Activated naive CD4-positive, alpha-beta T cell treated with anti-CD3 and anti-CD28 coated beads for 36 hours (primary cell): ENCODE measurements at regions of chr6 and their contacts with region 1.

Region 1: DNA sequence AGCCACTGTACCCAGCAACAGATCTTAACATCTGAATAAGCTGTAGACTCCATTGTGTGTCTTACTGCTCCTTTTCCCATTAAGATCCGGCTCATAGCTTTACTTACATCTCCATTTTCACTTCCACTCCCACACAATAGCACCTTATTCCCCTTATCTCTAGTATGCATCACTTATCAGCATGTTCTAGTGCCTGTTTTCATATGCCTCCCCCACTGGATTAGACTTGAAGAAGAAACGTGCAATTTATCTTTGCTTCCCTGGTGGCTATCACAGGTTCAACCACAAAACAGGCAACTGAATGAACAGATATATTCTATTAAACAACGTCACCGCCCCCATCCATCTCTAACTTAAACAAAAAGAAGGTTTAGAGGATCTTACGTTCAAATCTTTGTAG is 12.1 kb downstream of the SSR1 start:
- DNase-seq: no peak
- H3K4me3 Mint-ChIP-seq: no peak overlapping the region
- H3K27ac Mint-ChIP-seq: no peak overlapping the region
- H3K4me1 Mint-ChIP-seq: peaks cover 19% of the 10 kb centered on the region
- H3K27me3 Mint-ChIP-seq: no peaks in the 10 kb centered on the region

Region 2: DNA sequence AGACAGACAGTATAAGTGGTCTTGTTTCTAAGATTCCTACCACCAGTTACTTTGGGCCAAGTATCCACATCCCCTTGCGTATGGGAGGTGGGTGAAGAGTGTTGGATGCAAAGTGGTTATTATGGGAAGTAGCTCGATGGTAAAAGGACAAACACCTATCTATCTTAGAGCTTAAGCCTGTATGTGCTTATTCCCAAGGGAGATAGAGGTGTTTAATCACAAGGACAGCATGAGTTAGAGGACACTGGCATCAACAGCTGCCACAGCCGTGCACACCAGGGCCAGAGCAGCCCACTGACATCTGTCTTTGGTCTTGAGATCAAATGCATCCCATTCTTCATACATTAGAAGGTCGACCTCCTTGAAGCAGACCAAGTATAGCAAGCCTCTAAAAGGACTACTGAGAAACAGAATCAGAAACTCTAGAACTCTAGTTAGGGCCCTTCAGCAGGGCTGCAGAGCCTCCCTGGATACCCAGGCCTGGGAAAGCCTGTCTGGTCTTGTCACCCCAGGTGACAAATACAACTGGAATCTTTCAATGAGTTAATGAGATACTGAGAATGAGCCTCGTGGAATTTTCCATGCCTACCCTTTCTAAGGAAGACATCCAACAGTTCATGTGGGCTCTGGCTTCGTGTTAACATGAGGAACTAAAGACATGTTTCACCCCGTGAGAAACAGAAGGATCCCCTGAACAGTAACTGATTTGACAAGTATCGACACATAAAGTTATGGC is 581.0 kb after region 1 on chr6:
- CTCF ChIA-PET with region 1: no interaction called
- intact Hi-C with region 1: loop called (anchors 10 kb)
- DNase-seq: no peak
- H3K4me3 Mint-ChIP-seq: no peak overlapping the region
- H3K27ac Mint-ChIP-seq: no peak overlapping the region
- H3K4me1 Mint-ChIP-seq: no peaks in the 10 kb centered on the region
- H3K27me3 Mint-ChIP-seq: no peaks in the 10 kb centered on the region